Endothelial cell of umbilical vein (primary cell): ENCODE measurements at regions of chr18 and their contacts with region 1.

Region 1: GRCh38 chr18:76450452-76451395 is 44.3 kb downstream of the ZNF516 start:
- DNase-seq: peak; percentile 72
- H3K4me3 ChIP-seq: peak overlapping the region; percentile 51 to 88 (median 56)
- H3K27ac ChIP-seq: peak overlapping the region; percentile 94
- H3K4me1 ChIP-seq: peaks cover 20% of the 10 kb centered on the region
- H3K27me3 ChIP-seq: peaks cover 0 to 1% of the 10 kb centered on the region in 2 experiments
- CTCF ChIP-seq: no peak
- POLR2A ChIP-seq: no peak

Region 2: GRCh38 chr18:76306685-76307292 is 143.9 kb before region 1 on chr18:
- CTCF ChIA-PET with region 1: no interaction called
- POLR2A ChIA-PET with region 1: no interaction called
- dilution Hi-C with region 1: no loop called
- intact Hi-C with region 1: no loop called
- DNase-seq: no peak
- H3K4me3 ChIP-seq: no peak overlapping the region
- H3K27ac ChIP-seq: no peak overlapping the region
- H3K4me1 ChIP-seq: no peaks in the 10 kb centered on the region
- H3K27me3 ChIP-seq: no peaks in the 10 kb centered on the region
- CTCF ChIP-seq: no peak
- POLR2A ChIP-seq: no peak

Region 3: GRCh38 chr18:76426737-76427305 is 23.9 kb before region 1 on chr18:
- CTCF ChIA-PET with region 1: no interaction called
- POLR2A ChIA-PET with region 1: no interaction called
- dilution Hi-C with region 1: no loop called
- intact Hi-C with region 1: no loop called
- DNase-seq: no peak
- H3K4me3 ChIP-seq: no peak overlapping the region
- H3K27ac ChIP-seq: no peak overlapping the region
- H3K4me1 ChIP-seq: no peaks in the 10 kb centered on the region
- H3K27me3 ChIP-seq: no peaks in the 10 kb centered on the region
- CTCF ChIP-seq: peak; percentile 76 to 77
- POLR2A ChIP-seq: no peak

Region 4: GRCh38 chr18:76466410-76466991 is 15.8 kb after region 1 on chr18:
- CTCF ChIA-PET with region 1: no interaction called
- POLR2A ChIA-PET with region 1: no interaction called
- dilution Hi-C with region 1: no loop called
- intact Hi-C with region 1: no loop called
- DNase-seq: no peak
- H3K4me3 ChIP-seq: no peak overlapping the region
- H3K27ac ChIP-seq: no peak overlapping the region
- H3K4me1 ChIP-seq: no peaks in the 10 kb centered on the region
- H3K27me3 ChIP-seq: no peaks in the 10 kb centered on the region
- CTCF ChIP-seq: no peak
- POLR2A ChIP-seq: no peak

Region 5: DNA sequence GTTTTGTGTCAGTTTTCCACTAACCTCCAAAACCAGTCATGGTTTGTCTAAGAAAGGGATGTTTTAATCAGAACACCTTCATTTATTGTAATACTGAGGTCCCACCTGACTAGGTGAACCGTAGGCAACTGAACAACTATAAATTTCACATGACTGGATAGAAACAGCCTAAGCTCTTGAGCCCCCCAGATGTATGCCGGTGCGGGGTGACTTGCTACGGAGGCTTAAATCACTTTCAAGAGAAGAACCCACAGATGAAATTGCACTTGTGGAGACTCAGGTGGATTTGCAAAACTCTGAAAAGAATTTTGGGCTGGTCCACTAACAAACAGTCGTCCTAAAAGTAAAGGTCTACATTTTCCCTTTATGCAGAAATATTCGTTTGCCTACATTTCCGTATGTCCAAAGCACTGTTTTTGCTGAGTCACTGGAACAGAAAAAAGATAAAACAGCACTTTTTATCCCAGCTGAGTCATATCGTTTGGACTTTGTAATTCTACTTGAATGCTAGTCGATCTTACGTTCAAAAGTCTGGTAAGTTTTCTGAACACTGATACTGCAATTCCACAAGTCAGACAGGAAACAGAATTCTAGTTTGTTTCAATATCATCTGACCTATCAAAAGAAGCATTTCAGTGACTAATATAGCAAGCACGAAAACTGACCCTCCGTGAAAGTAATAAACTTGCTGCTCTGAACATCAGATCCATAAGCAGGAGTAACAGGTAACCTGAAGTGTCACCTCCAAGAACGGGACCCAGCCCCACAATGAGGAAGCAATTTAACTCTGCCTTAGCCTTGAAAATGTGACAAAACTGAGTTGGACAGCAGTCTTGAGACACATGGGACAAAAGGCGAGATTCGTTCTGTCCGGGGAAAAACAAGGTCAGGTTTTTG is 26.2 kb after region 1 on chr18:
- CTCF ChIA-PET with region 1: interaction called, 3 read pairs
- POLR2A ChIA-PET with region 1: no interaction called
- dilution Hi-C with region 1: no loop called
- intact Hi-C with region 1: loop called (anchors 1 kb)
- DNase-seq: peak; percentile 62
- H3K4me3 ChIP-seq: peak overlapping the region; percentile 15 to 68 (median 32)
- H3K27ac ChIP-seq: peak overlapping the region; percentile 72
- H3K4me1 ChIP-seq: peaks cover 24% of the 10 kb centered on the region
- H3K27me3 ChIP-seq: no peaks in the 10 kb centered on the region
- CTCF ChIP-seq: no peak
- POLR2A ChIP-seq: no peak

Region 6: GRCh38 chr18:76697441-76697901 is 246.7 kb after region 1 on chr18:
- CTCF ChIA-PET with region 1: no interaction called
- POLR2A ChIA-PET with region 1: no interaction called
- dilution Hi-C with region 1: no loop called
- intact Hi-C with region 1: loop called (anchors 1 kb)
- DNase-seq: peak; percentile 47
- H3K4me3 ChIP-seq: peak overlapping the region; percentile 16 to 58 (median 23)
- H3K27ac ChIP-seq: peak overlapping the region; percentile 52
- H3K4me1 ChIP-seq: peaks cover 12% of the 10 kb centered on the region
- H3K27me3 ChIP-seq: no peaks in the 10 kb centered on the region
- CTCF ChIP-seq: no peak
- POLR2A ChIP-seq: no peak

Region 7: GRCh38 chr18:76822510-76823160 is 371.9 kb after region 1 on chr18 and contains the start of gene ZNF236:
- CTCF ChIA-PET with region 1: no interaction called
- POLR2A ChIA-PET with region 1: no interaction called
- dilution Hi-C with region 1: no loop called
- intact Hi-C with region 1: loop called (anchors 5 kb)
- DNase-seq: peak; percentile 44
- H3K4me3 ChIP-seq: peak within 1 kb of the TSS; percentile 54 to 98 (median 75)
- H3K27ac ChIP-seq: peak within 1 kb of the TSS; percentile 63
- H3K4me1 ChIP-seq: peaks cover 25% of the 10 kb centered on the region
- H3K27me3 ChIP-seq: no peaks in the 10 kb centered on the region
- CTCF ChIP-seq: no peak
- POLR2A ChIP-seq: peak; percentile 73
- total RNA-seq, gene ZNF236: 13.6 and 14.7 TPM in 2 replicates